Naive thymus-derived CD8-positive, alpha-beta T cell (primary cell): ENCODE measurements at regions of chr17 and their contacts with region 1.

Region 1: GRCh38 chr17:20315821-20316220 is 151.5 kb downstream of the LGALS9B start:
- DNase-seq: no peak
- ATAC-seq: no peak
- H3K4me3 Mint-ChIP-seq: no peak overlapping the region
- H3K27ac Mint-ChIP-seq: no peak overlapping the region
- H3K4me1 Mint-ChIP-seq: peaks cover 0 to 3% (median under 1%) of the 10 kb centered on the region in 4 donors
- H3K27me3 Mint-ChIP-seq: no peaks in the 10 kb centered on the region

Region 2: GRCh38 chr17:20216154-20216815 is 99.5 kb before region 1 on chr17:
- POLR2A ChIA-PET with region 1: no interaction called
- DNase-seq: no peak
- ATAC-seq: no peak
- H3K4me3 Mint-ChIP-seq: no peak overlapping the region
- H3K27ac Mint-ChIP-seq: no peak overlapping the region
- H3K4me1 Mint-ChIP-seq: no peaks in the 10 kb centered on the region
- H3K27me3 Mint-ChIP-seq: no peaks in the 10 kb centered on the region

Region 3: GRCh38 chr17:20226814-20227482 is 88.9 kb before region 1 on chr17:
- POLR2A ChIA-PET with region 1: interaction called, 10 read pairs
- DNase-seq: peak; percentile 67 to 89 (median 78)
- ATAC-seq: peak; percentile 99 to 100
- H3K4me3 Mint-ChIP-seq: peak overlapping the region in 4 of 10 donors; percentile 5 to 58 (median 36)
- H3K27ac Mint-ChIP-seq: peak overlapping the region in 4 of 10 donors; percentile 31 to 88 (median 72)
- H3K4me1 Mint-ChIP-seq: peaks cover 10 to 41% (median 17%) of the 10 kb centered on the region in 4 donors
- H3K27me3 Mint-ChIP-seq: peaks cover 0 to 6% (median 2%) of the 10 kb centered on the region in 5 donors

Region 4: GRCh38 chr17:20244671-20245070 is 71.2 kb before region 1 on chr17:
- POLR2A ChIA-PET with region 1: no interaction called
- DNase-seq: no peak
- ATAC-seq: no peak
- H3K4me3 Mint-ChIP-seq: no peak overlapping the region
- H3K27ac Mint-ChIP-seq: peak overlapping the region in 2 of 10 donors; percentile 20 to 31
- H3K4me1 Mint-ChIP-seq: peaks cover 27 to 44% (median 34%) of the 10 kb centered on the region in 4 donors
- H3K27me3 Mint-ChIP-seq: no peaks in the 10 kb centered on the region